GM10248 (cell line): ENCODE measurements at regions of chr14 and their contacts with region 1.

Region 1: GRCh38 chr14:22994762-22995275 is 12.5 kb upstream of the AJUBA start:
- DNase-seq: peak; percentile 45
- CTCF ChIP-seq: peak; percentile 63

Region 2: GRCh38 chr14:22570132-22570949 is 424.5 kb before region 1 on chr14:
- CTCF ChIA-PET with region 1: no interaction called
- POLR2A ChIA-PET with region 1: no interaction called
- DNase-seq: peak; percentile 81
- CTCF ChIP-seq: peak; percentile 93

Region 3: DNA sequence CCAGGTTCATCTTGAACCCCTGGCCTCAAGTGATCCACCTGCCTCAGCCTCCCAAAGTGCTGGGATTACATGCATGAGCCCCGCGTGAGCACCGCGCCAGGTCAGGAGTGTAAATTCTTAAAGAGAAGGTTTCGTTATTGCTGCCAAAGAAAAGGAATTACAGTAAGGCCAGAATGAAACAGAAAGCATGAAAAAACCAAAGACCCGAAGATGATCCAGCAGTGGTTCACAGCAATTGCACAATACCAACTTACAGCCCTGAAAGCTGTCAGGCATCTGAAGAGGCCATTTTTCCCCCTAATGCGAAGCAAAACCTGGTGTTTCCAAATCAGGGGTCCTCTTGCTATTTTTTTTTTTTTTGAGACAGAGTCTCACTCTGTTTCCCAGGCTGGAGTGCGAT is 86.2 kb before region 1 on chr14:
- CTCF ChIA-PET with region 1: no interaction called
- POLR2A ChIA-PET with region 1: no interaction called
- DNase-seq: no peak
- CTCF ChIP-seq: no peak

Region 4: GRCh38 chr14:22973217-22974032 is 21.4 kb before region 1 on chr14:
- CTCF ChIA-PET with region 1: interaction called, 270 read pairs
- POLR2A ChIA-PET with region 1: no interaction called
- DNase-seq: peak; percentile 63
- CTCF ChIP-seq: peak; percentile 80

Region 5: DNA sequence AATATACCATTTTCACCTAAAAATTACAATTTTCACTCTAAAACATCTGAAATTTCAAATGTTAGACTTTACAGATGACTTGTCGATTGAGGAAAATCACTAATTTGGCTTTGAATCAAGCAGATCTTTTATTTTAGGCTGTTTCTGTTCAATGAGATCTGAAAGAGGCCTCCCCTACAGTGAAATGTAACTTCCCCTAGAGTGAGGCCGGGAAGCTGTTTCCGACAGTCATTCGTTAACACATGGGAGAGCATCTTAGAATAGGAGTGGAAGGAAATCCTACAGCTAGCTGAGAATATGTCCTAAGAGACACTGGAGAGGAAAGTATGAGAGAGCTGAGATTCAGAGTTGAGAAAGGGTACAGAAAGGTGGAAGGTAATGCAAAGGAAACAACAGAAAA is 20.8 kb after region 1 on chr14:
- CTCF ChIA-PET with region 1: interaction called, 41 read pairs
- POLR2A ChIA-PET with region 1: no interaction called
- DNase-seq: no peak
- CTCF ChIP-seq: no peak

Region 6: GRCh38 chr14:23041729-23042128 is 46.9 kb after region 1 on chr14:
- CTCF ChIA-PET with region 1: interaction called, 834 read pairs
- POLR2A ChIA-PET with region 1: no interaction called
- DNase-seq: no peak
- CTCF ChIP-seq: no peak

Region 7: DNA sequence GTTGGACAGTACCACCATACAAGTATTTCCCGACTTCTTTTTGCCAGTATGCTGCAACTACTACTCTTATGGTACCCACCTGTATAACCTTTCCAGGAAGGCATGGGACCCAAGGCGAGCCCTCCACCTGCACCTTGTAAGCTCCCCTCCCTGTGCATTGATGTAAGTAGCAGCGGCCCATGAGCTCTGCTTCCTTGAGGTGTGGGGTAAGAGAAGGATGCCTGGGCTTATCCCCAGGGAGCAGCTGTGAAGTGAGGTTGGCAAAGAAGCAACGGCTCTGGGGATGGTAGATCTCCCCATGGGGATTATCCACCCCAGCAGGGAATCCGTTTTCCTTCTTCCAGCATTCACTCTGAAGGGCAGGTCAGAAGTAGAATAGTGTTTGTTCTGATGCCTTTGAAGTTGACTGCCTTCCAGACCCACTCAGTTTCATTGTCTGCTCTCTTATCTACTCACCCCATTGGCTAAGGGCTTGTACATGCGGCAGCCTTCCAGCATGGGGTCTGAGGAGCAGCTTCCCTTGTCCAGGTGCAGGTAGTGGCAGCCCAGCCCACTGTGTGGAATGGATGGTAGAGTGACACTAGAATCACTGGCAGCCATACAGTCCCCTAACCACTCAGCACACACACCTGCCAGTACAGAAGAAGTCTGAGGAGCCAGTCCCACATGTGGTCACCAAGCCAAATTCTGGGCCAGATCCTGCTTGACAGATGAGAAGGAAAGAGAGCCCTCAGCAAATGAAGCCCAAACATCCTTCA is 106.6 kb after region 1 on chr14:
- CTCF ChIA-PET with region 1: no interaction called
- POLR2A ChIA-PET with region 1: no interaction called
- DNase-seq: no peak
- CTCF ChIP-seq: no peak

Region 8: GRCh38 chr14:23113431-23114119 is 118.8 kb after region 1 on chr14:
- CTCF ChIA-PET with region 1: interaction called, 12 read pairs
- POLR2A ChIA-PET with region 1: no interaction called
- DNase-seq: peak; percentile 5
- CTCF ChIP-seq: no peak

Region 9: GRCh38 chr14:23195550-23196101 is 200.8 kb after region 1 on chr14:
- CTCF ChIA-PET with region 1: no interaction called
- POLR2A ChIA-PET with region 1: no interaction called
- DNase-seq: no peak
- CTCF ChIP-seq: no peak